ENCODE measurements at regions of chr18 and their contacts with region 1.

Region 1: GRCh38 chr18:77899972-77900754 is 650.5 kb downstream of the GALR1 start:
- DNase-seq: peak; percentile 45
- H3K4me3 Mint-ChIP-seq: no peak overlapping the region
- H3K27ac Mint-ChIP-seq: no peak overlapping the region
- H3K4me1 Mint-ChIP-seq: no peaks in the 10 kb centered on the region
- H3K27me3 Mint-ChIP-seq: peaks cover 8% of the 10 kb centered on the region

Region 2: GRCh38 chr18:77985526-77986281 is 85.5 kb after region 1 on chr18:
- intact Hi-C with region 1: loop called (anchors 10 kb)
- DNase-seq: no peak
- H3K4me3 Mint-ChIP-seq: no peak overlapping the region
- H3K27ac Mint-ChIP-seq: no peak overlapping the region
- H3K4me1 Mint-ChIP-seq: no peaks in the 10 kb centered on the region
- H3K27me3 Mint-ChIP-seq: no peaks in the 10 kb centered on the region

Region 3: DNA sequence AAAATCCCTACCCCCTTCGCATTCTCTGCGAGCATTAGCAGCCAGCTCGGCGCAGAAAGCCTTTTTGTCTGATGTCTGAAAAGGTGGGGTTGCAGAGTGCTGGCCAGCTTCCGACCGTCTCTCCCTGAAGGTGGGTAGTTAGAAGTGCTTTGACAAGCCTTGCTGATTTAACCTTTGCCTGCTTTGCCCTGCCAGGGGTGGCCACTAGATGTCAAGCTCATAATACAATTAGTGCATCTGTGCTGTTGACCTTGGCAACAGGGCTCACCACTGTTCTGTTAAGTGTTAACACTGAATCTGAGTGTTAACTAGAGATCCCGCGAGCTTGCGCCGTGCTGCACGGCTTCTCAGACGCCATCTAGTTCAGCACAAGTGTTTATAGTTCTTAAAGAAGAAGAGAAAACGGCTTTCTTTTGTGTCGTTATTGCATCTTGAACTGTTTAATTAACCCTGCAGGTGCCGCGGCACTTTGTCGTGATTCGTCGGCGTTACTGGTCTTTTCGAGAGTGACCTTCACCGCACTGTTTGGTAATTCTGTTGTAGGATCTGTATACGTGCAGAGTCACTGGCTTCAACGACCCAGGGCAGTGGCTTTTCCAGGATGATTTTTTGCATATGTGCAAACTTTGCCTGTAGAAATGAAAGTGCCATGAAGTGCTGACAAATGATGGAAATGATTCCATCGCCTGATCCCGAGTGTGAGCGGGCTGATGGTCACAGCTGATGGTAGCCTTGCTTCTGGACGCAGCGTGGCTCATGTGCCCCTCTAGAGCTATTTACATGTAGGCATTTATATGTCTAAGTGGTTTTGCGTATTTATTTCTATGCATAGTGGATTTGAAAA is 1085.0 kb after region 1 on chr18:
- intact Hi-C with region 1: loop called (anchors 5 kb)
- DNase-seq: no peak
- H3K4me3 Mint-ChIP-seq: no peak overlapping the region
- H3K27ac Mint-ChIP-seq: no peak overlapping the region
- H3K4me1 Mint-ChIP-seq: no peaks in the 10 kb centered on the region
- H3K27me3 Mint-ChIP-seq: peaks cover 69% of the 10 kb centered on the region

Region 4: GRCh38 chr18:79246348-79247108 is 1346.4 kb after region 1 on chr18:
- intact Hi-C with region 1: loop called (anchors 10 kb)
- DNase-seq: peak; percentile 59
- H3K4me3 Mint-ChIP-seq: no peak overlapping the region
- H3K27ac Mint-ChIP-seq: no peak overlapping the region
- H3K4me1 Mint-ChIP-seq: peaks cover 13% of the 10 kb centered on the region
- H3K27me3 Mint-ChIP-seq: peaks cover 2% of the 10 kb centered on the region